ENCODE measurements at regions of chr3 and their contacts with region 1.

Region 1: DNA sequence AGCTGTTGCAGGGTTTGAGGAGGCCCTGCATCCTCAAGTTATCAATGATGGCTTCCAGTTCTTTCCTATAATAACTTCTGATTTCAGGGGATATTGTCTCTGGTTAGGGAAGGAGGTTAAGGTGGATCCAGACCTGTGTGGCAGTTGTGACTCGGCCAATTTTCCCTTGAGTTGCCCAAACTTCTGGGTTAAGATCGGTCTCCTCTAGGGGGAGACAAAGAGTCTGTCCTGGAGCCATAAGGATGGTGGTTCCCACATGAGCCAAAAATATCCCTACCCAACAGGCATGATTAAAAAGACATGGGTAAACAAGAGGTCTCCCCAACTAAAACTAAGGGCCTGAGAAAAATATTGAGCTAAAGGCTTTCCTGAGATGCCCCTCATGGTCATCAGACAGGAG is 227.5 kb upstream of the MDFIC2 start:
- DNase-seq: no peak
- CTCF ChIP-seq: peak; percentile 15

Region 2: DNA sequence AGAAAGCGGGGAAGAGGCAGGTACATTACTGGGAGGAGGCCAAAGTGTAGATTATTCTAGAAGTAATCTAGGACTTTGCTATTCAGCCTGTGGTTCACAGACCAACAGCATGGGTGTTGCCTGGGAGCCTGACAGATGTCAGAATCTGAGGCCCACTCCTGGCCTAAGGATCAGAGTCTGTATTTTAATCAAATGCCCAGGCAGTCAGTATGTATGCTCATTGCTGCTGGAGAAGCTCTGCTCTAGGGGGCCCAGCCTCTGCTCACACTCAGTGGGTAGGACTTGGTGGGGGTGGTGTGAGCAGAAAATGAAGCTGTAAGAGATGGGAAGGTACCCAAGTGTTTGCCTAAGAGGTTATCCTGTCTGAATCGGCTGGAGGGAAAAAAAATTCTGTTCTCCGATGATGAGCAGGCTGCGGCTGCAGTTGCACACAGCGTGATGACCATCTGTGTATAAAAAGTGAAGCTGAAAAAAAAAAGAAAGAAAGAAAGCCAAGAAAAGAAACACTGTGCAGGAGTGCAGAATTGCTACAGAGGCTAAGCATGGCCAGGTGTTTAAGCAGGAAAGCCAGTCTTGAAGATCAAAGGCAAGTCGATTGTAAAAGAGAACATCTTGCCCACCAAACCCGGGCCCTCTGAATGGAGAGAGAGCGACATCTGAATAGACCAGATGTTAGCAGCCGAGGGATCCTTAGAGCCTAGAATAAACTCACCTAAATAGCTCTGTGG is 1120.1 kb after region 1 on chr3:
- in situ Hi-C with region 1: loop called (anchors 10 kb)
- DNase-seq: no peak
- CTCF ChIP-seq: no peak

Measured in GM13976 (cell line).